IMR-90 (cell line): ENCODE measurements at regions of chr3 and their contacts with region 1.

Region 1: DNA sequence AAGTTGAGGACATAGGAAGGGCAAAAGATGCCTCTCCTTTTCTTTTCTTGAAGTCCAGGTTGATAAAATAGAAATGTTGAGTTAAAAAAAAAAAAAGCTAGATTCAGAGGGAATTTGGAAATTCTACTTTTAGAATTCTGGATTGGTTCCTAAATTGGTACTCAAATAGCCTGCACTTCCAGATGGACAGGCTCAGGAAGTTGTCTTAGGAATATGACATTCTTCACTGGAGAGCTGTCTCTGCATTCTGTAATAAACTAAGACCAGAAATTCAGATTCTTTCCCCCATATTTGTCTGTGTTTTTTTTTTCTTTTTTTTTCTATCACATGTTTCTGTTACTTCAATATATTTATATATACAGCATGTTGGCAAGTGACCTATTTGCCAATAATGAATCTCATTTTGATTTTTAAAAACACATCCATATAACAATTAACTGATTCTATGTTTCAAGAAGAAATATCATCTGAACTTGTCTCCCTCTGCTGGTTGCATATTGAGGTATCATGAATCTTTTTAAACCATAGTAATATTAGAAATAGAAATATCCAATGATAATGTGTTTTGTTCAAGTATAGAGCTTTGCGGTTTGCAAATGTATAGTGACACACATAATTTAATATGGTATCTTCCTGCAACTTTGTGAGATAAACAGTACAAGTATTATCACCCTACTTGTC is 8.5 kb upstream of the LSAMP start:
- DNase-seq: peak; percentile 30
- ATAC-seq: no peak
- H3K4me3 ChIP-seq: no peak overlapping the region
- H3K27ac ChIP-seq: no peak overlapping the region
- H3K4me1 ChIP-seq: no peaks in the 10 kb centered on the region
- H3K27me3 ChIP-seq: no peaks in the 10 kb centered on the region
- CTCF ChIP-seq: peak; percentile 46
- POLR2A ChIP-seq: no peak
- RAD21 ChIP-seq: peak; percentile 41; the same call in 1 of the 2 replicates

Region 2: DNA sequence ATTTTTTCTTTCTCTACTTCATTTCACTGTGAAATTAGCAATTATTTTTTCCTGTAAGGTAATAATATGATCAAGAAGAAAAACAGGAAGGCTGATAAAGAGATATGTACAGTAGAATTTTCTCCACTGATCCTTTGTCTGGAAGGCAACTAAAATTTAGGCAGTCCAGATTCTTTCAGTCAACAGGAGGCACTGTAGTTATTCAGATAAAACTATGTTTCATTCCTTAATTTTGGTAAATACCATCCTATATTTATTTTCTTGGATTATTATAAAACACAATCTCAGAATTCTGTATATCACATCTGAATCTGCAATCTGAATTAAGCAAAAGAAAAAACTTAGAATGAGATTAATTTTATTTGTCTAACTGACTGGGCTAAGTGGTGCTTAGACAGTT is 351.8 kb before region 1 on chr3:
- CTCF ChIA-PET with region 1: no interaction called
- POLR2A ChIA-PET with region 1: no interaction called
- dilution Hi-C with region 1: no loop called
- in situ Hi-C with region 1: no loop called
- intact Hi-C with region 1: loop called (anchors 5 kb)
- DNase-seq: no peak
- ATAC-seq: no peak; the same call in 1 of the 2 replicates
- H3K4me3 ChIP-seq: no peak overlapping the region
- H3K27ac ChIP-seq: no peak overlapping the region
- H3K4me1 ChIP-seq: 0 out of 2 replicates have a peak, but pooled peaks cover 2% of the 10 kb centered on the region
- H3K27me3 ChIP-seq: no peaks in the 10 kb centered on the region
- CTCF ChIP-seq: peak; percentile 22; the same call in 1 of the 2 replicates
- POLR2A ChIP-seq: no peak
- RAD21 ChIP-seq: no peak

Region 3: DNA sequence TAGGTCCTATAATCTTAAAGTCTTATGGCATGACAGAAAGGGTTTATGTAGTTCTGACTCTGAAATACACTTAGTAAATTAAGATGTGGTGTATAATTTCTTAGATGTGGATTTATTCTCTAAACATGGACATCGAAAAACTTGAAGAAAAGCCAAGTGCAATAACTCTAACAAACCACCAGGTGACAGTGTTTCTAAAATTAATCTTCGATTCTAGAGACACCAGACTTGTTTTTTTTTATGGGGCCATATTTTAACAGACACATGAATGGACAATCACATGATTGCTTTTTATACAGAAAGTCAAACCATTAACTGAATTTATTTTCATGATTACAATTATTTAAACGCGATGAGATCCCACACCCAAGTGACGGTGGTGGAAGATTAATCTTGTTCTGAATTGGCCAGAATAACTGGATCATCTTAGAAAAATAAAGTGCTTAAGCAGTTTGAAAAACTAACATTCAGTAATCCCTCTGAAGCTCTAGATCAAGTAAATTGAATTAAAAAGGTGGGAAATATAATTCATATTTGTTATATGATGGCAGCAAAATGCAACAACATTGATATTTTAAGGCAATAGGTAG is 313.6 kb before region 1 on chr3:
- CTCF ChIA-PET with region 1: no interaction called
- POLR2A ChIA-PET with region 1: interaction called, 4 read pairs
- dilution Hi-C with region 1: no loop called
- in situ Hi-C with region 1: loop called (anchors 10 kb)
- intact Hi-C with region 1: loop called (anchors 1 kb)
- DNase-seq: peak; percentile 47
- ATAC-seq: no peak
- H3K4me3 ChIP-seq: no peak overlapping the region
- H3K27ac ChIP-seq: no peak overlapping the region
- H3K4me1 ChIP-seq: no peaks in the 10 kb centered on the region
- H3K27me3 ChIP-seq: no peaks in the 10 kb centered on the region
- CTCF ChIP-seq: peak; percentile 79
- POLR2A ChIP-seq: no peak
- RAD21 ChIP-seq: peak; percentile 66